Psoas muscle (tissue), 8 donors: ENCODE measurements at regions of chr2 and their contacts with region 1.

Region 1: DNA sequence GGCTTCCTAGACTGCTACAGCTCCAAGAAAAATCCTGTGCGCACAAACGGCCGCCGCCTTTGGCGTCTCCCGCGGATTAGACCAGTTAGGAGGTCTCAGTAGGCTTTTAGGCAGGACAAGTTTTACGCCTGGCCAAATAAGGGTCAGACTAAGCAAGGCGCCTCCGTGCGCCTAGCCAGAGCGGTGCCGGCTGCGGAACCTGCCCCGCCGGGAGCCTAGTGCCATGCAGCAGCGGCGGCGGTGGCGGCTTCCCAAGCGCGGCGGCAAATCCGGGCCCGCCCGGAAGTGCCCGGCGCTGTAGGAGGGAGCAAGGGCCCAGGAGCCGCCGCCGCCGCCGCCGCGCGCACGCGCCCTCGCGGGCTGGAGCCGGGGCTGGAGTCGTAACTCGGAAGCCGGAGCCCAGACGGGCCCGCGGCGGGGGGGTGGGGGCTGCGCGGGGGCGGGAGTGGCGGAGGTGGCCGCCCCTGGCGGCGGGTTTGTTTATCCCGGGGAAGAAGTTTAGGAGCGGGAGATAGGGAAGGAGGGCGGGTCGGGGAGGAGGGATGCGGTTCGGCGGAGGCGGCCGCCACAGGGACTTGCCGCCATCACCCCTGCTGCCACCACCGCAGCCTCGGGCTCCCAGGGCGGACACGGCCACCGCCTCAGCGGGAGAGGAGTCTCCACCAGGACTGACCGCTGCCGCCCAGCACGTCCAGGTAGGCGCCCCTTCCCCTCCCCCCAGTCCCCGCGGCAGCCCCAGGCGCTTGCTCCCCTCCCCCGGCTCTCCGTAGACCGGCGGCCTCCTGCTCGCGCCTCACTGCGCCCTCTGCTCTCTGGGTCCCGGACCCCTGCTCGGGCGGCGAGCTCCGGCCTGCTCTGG is at the start of gene SPOPL:
- DNase-seq: peak; percentile 94 to 97
- ATAC-seq: peak; percentile 97 to 98 (median 98)
- H3K4me3 ChIP-seq: peak within 1 kb of the TSS; percentile 94
- H3K27ac ChIP-seq: peak within 1 kb of the TSS; percentile 95
- H3K4me1 ChIP-seq: peaks cover 39% of the 10 kb centered on the region
- H3K27me3 ChIP-seq: no peaks in the 10 kb centered on the region
- CTCF ChIP-seq: peak; percentile 40
- total RNA-seq, gene SPOPL: 7.6 to 19.0 (median 13.5) TPM

Region 2: GRCh38 chr2:138559641-138560040 is 58.0 kb after region 1 on chr2:
- intact Hi-C with region 1: loop called in 1 of 2 experiments (anchors 10 kb)
- DNase-seq: no peak
- ATAC-seq: no peak
- H3K4me3 ChIP-seq: no peak overlapping the region
- H3K27ac ChIP-seq: no peak overlapping the region
- H3K4me1 ChIP-seq: no peaks in the 10 kb centered on the region
- H3K27me3 ChIP-seq: no peaks in the 10 kb centered on the region
- CTCF ChIP-seq: no peak